G401 (cell line): ENCODE measurements at regions of chr5 and their contacts with region 1.

Region 1: DNA sequence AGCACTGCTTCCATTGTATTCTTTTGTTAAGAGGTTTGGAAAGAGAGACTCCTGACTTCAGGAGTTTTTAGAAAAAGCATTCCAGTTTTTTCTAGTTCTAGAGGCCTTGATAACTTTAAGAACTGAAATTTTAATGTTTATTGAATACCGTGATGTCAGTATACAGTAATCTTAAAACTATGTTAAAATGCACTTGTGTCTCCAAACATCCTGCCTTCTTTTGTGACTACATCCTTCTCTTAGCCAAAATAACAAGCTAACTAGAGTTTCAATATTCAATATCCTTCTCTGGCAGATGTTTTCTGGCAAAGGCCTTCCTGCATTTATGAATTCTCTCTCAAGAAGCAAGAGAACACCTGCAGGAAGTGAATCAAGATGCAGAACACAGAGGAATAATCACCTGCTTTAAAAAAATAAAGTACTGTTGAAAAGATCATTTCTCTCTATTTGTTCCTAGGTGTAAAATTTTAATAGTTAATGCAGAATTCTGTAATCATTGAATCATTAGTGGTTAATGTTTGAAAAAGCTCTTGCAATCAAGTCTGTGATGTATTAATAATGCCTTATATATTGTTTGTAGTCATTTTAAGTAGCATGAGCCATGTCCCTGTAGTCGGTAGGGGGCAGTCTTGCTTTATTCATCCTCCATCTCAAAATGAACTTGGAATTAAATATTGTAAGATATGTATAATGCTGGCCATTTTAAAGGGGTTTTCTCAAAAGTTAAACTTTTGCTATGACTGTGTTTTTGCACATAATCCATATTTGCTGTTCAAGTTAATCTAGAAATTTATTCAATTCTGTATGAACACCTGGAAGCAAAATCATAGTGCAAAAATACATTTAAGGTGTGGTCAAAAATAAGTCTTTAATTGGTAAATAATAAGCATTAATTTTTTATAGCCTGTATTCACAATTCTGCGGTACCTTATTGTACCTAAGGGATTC is 43.1 kb downstream of the NDFIP1 start:
- DNase-seq: peak; percentile 79

Region 2: GRCh38 chr5:142324871-142325724 is 173.4 kb after region 1 on chr5 and contains the start of gene SPRY4:
- in situ Hi-C with region 1: loop called (anchors 25 kb)
- DNase-seq: peak; percentile 95
- total RNA-seq, gene SPRY4: 6.5 and 7.9 TPM in 2 replicates